Aorta (tissue), 5 donors: ENCODE measurements at regions of chr11 and their contacts with region 1.

Region 1: DNA sequence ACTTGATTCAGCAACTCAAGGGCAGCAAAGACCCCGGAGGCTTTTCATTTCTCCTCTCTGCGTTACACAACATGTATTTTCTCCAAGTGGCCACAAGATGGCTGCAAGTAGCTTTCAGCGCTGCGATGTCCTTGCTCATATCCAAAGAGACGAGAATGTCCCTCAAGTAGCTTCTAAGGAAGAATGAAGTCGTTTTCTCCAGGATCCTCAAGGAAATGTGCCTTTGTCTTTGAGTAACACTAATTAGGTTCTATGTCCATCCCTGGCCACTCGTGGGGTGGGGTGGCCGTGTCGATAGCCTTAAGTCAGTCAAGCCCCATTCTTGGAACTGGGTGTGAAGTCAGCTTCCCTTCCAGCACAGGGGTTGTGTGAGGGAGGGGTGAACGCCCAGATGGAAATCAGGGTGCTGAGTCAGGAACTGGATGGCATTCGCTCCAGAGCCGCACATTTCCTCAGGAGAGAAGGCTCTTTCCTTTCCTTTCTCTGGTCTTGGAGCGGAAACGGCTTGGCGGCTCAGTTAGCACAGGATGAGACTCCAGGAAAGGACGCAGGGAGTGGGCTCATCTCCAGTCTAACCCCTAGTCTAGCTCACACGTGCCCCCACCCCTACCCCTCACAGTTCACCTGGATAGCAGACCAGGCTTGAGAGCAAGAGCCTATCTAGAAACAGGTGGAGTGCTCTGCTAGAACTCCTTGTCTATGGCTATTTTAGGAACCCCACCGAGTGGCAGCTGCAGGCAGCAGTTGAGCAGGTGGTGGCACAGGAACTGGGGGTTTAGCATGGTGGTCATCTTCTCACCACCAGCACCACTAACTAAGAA is 44.3 kb downstream of the NNMT start:
- DNase-seq: peak; percentile 64 to 80
- ATAC-seq: peak; percentile 87
- H3K4me3 ChIP-seq: peak overlapping the region in 1 of 2 donors; percentile 69
- H3K27ac ChIP-seq: peak overlapping the region in 1 of 2 donors; percentile 34
- H3K4me1 ChIP-seq: no peaks in the 10 kb centered on the region
- H3K27me3 ChIP-seq: no peaks in the 10 kb centered on the region

Region 2: DNA sequence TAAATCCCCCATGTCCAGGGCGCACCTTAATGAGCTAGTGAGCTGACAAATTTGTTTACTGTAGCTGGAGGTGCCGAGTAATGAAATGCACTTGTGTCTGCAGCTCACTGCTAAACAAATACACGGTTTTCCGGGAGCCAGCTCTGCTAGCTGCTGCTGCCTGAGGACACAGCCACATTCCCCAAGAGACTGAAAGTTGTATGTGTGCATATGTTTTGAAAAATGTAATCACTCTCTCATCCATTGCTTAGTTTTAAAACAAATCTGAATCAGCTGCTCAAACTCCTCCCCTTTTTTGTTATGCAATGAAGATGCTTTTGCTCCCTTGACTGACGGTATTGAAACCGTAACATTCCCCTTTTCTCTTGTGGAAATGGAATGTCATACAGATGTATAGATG is 106.8 kb before region 1 on chr11:
- intact Hi-C with region 1: no loop called
- DNase-seq: no peak
- ATAC-seq: no peak
- H3K4me3 ChIP-seq: no peak overlapping the region
- H3K27ac ChIP-seq: no peak overlapping the region
- H3K4me1 ChIP-seq: peaks cover 0 to 3% of the 10 kb centered on the region in 2 donors
- H3K27me3 ChIP-seq: no peaks in the 10 kb centered on the region

Region 3: GRCh38 chr11:114762408-114762807 is 421.9 kb after region 1 on chr11:
- intact Hi-C with region 1: loop called (anchors 5 kb)
- DNase-seq: peak; percentile 73 to 86
- ATAC-seq: peak; percentile 75
- H3K4me3 ChIP-seq: no peak overlapping the region
- H3K27ac ChIP-seq: no peak overlapping the region
- H3K4me1 ChIP-seq: no peaks in the 10 kb centered on the region
- H3K27me3 ChIP-seq: no peaks in the 10 kb centered on the region